Keratinocyte (primary cell): ENCODE measurements at regions of chr2 and their contacts with region 1.

Region 1: GRCh38 chr2:124961132-124961531 is 936.0 kb downstream of the CNTNAP5 start:
- DNase-seq: no peak
- H3K4me3 ChIP-seq: no peak overlapping the region
- H3K27ac ChIP-seq: no peak overlapping the region
- H3K4me1 ChIP-seq: no peaks in the 10 kb centered on the region
- H3K27me3 ChIP-seq: no peaks in the 10 kb centered on the region
- CTCF ChIP-seq: no peak

Region 2: DNA sequence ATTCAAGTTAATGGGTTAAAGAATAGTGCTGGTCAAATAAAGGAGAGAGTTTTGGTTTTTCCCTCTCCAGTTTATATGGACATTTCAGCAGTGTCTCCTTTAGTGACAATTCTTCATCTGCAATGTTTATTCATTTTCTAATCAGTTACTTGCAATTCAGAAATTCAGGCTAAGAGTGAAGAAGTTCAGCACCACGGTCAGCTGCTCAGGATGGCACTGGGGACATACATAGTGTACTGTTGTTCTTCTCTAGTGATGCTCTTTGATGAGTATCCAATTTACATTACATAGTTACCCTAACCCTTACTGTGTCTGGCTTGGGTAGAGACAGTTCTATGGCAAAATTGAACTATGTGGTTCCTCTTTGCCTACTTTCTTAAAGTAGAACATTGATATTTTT is 523.3 kb before region 1 on chr2:
- dilution Hi-C with region 1: no loop called
- DNase-seq: no peak
- H3K4me3 ChIP-seq: no peak overlapping the region
- H3K27ac ChIP-seq: no peak overlapping the region
- H3K4me1 ChIP-seq: no peaks in the 10 kb centered on the region
- H3K27me3 ChIP-seq: no peaks in the 10 kb centered on the region
- CTCF ChIP-seq: no peak

Region 3: DNA sequence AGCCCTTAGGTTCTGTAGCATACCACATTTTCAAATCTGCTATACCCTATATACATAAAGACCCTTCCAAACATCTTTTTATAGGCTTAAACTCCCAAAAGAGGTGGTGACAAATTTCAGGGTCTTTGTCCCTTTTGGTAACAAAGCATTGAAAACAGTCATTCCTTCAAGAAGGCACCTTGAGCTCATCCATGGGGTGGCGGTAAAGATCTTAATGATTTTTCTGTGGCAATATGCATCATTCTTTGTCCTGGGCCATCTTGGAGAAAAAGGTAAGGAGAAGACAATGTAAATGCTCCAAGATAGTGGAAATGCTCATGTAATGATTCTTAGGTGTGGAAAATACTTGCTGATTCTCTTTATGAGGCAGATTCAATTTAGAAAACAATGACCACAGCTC is 45.6 kb before region 1 on chr2:
- dilution Hi-C with region 1: loop called (anchors 5 kb)
- DNase-seq: no peak
- H3K4me3 ChIP-seq: no peak overlapping the region
- H3K27ac ChIP-seq: no peak overlapping the region
- H3K4me1 ChIP-seq: no peaks in the 10 kb centered on the region
- H3K27me3 ChIP-seq: no peaks in the 10 kb centered on the region
- CTCF ChIP-seq: no peak

Region 4: DNA sequence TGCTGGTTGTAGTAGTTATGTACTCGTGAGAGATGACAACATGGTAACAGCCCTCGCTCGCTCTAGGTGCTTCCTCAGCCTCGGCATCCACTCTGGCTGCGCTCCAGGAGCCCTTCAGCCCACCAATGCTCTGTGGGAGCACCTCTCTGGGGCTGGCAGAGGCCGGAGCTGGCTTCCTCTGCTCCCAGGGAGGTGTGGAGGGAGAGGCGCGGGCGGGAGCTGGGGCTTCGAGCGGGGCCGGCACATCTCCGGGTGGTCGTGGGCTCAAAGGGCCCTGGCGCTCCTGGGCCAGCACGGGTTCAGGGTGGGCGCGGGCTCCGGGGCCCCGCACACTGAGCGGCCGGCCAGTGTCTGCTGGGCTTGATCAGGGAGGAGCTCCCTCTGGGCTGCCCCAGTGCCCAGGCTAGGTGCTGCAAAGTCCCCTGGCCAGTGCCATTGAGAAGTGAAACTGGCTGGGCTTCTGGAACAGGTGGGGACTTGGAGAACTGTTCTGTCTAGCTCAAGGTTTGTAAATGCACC is 76.1 kb after region 1 on chr2:
- dilution Hi-C with region 1: no loop called
- DNase-seq: no peak
- H3K4me3 ChIP-seq: no peak overlapping the region
- H3K27ac ChIP-seq: no peak overlapping the region
- H3K4me1 ChIP-seq: no peaks in the 10 kb centered on the region
- H3K27me3 ChIP-seq: no peaks in the 10 kb centered on the region
- CTCF ChIP-seq: no peak